HEK293 (cell line): ENCODE measurements at regions of chr1 and their contacts with region 1.

Region 1: GRCh38 chr1:230120926-230121381 is 53.9 kb downstream of the GALNT2 start:
- H3K4me3 ChIP-seq: no peak overlapping the region
- H3K27ac ChIP-seq: no peak overlapping the region
- H3K4me1 ChIP-seq: no peaks in the 10 kb centered on the region
- CTCF ChIP-seq: no peak

Region 2: DNA sequence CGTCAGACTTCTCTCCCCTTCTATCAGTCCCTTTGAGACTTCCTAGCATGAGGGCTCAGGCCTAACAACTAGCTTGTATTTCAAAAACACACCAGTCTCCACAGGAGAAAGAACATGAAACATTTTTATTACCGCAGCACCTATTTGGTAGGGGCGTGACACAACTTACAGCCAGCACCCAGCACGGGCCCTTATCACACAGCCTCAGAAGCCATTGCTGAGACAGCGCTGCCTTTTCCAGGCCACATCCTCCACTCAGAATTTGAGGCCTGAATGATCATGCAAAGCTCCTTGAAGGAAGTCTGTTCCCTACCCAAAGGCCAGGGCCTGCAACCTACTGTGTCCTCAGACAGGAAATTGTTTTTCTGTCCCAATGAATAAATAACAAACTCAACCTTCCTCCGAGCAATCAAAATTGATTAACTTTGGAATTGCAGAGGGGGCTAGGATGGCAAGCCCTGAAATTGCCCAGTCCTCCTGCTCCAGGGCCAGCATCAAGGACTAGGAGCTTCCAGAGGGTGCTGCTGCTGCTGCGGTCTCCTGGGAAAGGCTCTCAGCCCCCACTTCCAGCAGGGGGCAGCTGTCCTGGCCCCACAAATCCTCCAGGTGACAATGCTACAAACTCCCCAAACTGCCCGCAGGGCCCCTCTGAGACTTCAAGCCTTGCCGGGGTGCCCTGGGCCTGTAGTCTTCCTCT is 148.2 kb before region 1 on chr1:
- CTCF ChIA-PET with region 1: no interaction called
- POLR2A ChIA-PET with region 1: no interaction called
- H3K4me3 ChIP-seq: no peak overlapping the region
- H3K27ac ChIP-seq: no peak overlapping the region
- H3K4me1 ChIP-seq: no peaks in the 10 kb centered on the region
- CTCF ChIP-seq: no peak

Region 3: DNA sequence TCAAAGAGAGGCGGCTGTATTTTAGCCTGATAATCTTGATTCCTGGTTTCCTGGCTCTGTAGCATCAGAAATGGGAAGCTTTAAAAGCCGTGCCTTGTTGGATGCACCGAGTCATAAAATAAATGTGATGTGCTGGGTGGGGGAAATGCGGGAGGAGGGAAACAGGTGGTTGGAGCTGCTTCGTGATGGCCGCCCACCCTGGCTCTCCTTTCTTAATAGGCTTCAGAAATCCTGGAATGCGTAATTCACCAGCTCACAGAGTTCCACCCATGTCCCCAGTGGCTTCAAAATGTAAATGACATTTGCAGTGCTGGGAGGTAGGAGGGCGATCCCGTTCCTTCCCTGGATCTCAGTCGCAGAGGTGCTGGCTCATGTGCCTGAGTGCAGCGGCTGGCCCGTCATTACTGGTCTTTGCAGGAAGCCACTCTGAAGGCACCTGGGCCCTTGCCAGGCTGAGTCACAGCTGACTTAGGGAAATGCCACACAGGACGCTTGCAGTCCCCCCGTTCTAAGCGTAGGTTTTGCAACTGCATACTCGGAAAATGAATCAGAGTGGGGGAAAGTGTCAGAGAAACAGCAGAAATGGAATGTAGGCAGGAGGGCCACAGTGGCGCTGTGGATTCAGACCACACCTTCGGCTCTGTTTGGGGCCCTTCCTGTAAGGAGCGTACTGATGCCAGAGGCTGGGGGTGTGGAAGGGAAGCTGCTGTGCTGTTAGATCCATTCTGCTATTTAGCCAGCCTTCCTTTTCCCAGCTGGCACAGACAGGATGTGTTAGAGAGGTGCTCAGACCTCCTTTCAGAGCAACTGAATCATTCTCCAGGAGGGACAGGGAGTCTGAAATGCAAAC is 16.3 kb before region 1 on chr1:
- CTCF ChIA-PET with region 1: interaction called, 18 read pairs
- POLR2A ChIA-PET with region 1: no interaction called
- H3K4me3 ChIP-seq: no peak overlapping the region; the same call in 1 of the 2 replicates
- H3K27ac ChIP-seq: no peak overlapping the region; the same call in 1 of the 2 replicates
- H3K4me1 ChIP-seq: peaks cover 42% of the 10 kb centered on the region
- CTCF ChIP-seq: peak; percentile 74

Region 4: DNA sequence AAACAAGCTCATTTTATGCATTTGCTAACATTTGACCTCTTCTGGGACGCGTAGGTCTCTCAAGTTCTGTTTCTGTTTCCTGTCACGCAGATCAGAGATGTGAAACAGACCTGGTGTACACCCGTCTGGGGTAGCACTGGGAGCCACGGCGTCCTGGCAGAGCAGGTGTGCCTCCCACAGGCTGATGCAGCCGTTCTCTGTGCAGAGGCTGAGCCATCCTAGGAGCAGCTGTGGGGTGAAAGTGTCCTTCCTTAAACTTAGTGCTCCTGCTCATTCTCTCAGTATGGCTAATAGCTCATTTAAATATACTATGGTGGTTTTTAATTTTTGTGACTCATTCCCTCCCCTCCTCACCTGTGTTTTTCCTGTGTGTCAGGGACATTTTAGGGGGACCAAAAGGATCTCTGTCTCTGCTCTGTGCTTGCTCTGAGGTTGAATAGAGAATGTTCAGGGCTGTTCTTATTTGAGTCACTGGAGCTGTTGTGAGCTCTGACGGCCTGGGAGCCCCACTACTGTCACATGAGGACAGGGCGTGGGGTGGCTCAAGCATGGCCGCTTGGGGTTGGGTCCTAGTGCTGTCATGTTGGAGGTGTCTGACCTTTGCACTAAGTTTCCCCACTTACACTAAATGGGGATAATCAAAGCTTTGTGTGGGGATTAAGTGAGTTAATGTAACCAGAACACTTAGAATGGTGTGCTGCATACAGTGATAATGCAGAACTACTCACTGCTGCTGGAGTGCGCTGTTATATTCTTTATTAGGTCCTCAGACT is 10.9 kb before region 1 on chr1:
- CTCF ChIA-PET with region 1: interaction called, 18 read pairs
- POLR2A ChIA-PET with region 1: interaction called, 3 read pairs
- H3K4me3 ChIP-seq: no peak overlapping the region
- H3K27ac ChIP-seq: no peak overlapping the region
- H3K4me1 ChIP-seq: peaks cover 14% of the 10 kb centered on the region
- CTCF ChIP-seq: no peak